ENCODE measurements at regions of chr3 and their contacts with region 1.

Region 1: DNA sequence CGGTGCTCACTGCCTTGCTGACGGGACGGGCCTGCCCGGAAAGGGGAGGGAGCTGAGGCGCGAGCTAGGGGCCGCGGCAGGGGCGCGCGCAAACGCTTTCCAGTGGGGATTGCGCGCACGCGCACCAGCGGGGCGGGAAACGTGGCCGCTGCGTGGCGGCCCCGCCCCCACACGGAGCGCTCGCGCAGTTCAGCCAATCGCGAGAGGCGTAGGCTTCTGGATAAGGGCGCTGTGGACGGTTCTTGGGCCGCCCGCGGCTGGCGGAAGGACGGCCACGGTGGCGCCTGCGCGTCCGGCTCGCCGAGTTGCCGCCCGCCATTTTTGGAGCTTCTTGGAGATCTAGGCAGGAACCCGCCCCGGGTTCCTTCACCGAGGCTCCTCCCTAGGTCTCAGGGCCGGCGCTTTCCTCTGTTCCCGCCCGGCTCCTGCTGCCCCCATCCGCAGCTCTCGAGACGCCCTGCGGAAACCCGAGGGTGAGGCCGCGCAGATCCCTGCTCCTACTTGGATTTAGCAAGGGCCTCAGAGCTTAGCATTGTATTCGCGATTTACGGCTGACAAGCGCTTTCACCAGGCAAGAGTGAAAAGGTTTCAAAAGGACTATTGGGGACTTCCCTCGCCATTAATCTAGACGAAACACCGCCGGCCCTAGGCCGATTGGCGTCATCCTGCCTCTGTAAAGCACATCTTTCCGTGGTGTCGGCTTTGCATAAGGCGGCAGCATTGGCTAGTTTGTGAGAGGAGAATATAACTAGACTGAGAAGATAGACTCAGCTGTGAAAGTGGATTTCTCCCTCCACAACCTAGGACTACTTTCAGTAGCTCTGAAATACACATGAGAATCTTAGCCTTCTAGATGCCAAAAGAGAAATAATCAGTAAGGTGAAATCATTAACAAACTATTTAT is 496 bp upstream of the STAG1 start:
- DNase-seq: peak; percentile 95 to 99 (median 99)
- ATAC-seq: peak; percentile 91
- H3K4me3 ChIP-seq: peak overlapping the region; percentile 87
- H3K4me3 Mint-ChIP-seq: peak overlapping the region; percentile 68 to 99 (median 88)
- H3K27ac ChIP-seq: peak overlapping the region; percentile 95
- H3K27ac Mint-ChIP-seq: peak overlapping the region; percentile 80 to 98 (median 94)
- H3K4me1 ChIP-seq: peaks cover 20 to 27% of the 10 kb centered on the region in 2 donors
- H3K4me1 Mint-ChIP-seq: peaks cover 37 to 50% (median 43%) of the 10 kb centered on the region in 7 donors
- H3K27me3 ChIP-seq: no peaks in the 10 kb centered on the region
- H3K27me3 Mint-ChIP-seq: no peaks in the 10 kb centered on the region

Region 2: DNA sequence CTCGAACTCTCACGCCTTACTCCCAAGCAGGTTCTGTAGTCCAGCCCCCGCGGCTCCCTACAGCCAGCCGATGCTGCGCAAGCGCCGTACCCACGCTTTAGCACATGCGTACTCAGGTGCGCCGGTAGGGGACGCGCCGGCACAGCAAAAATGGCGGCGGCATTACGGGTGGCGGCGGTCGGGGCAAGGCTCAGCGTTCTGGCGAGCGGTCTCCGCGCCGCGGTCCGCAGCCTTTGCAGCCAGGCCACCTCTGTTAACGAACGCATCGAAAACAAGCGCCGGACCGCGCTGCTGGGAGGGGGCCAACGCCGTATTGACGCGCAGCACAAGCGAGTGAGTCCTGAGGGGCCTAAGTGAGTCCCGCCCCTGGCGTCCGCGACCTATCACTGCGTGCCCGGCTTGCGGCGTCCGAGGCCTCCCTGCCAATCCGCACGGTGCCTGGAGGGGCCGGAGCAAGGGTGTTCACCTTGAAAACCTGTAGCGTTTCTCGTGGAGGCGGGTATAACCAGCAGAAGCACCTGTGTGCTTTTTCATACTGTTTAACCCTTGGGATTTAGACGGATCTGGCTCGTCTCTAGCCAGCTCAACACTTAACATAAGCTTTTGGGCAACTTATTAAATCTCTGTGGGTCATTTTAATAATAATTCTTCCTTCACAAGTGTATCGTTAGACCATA is 502.3 kb before region 1 on chr3 and contains the start of gene PCCB:
- CTCF ChIA-PET with region 1: interaction called, 5 read pairs
- POLR2A ChIA-PET with region 1: no interaction called
- intact Hi-C with region 1: loop called (anchors 1 kb)
- DNase-seq: peak; percentile 86 to 95 (median 93)
- ATAC-seq: peak; percentile 99
- H3K4me3 ChIP-seq: peak within 1 kb of the TSS; percentile 80
- H3K4me3 Mint-ChIP-seq: peak within 1 kb of the TSS; percentile 79 to 94 (median 90)
- H3K27ac ChIP-seq: peak within 1 kb of the TSS; percentile 80
- H3K27ac Mint-ChIP-seq: peak within 1 kb of the TSS; percentile 91 to 96 (median 93)
- H3K4me1 ChIP-seq: peaks cover 9% of the 10 kb centered on the region in 2 donors
- H3K4me1 Mint-ChIP-seq: peaks cover 12 to 30% (median 21%) of the 10 kb centered on the region in 7 donors
- H3K27me3 ChIP-seq: no peaks in the 10 kb centered on the region
- H3K27me3 Mint-ChIP-seq: no peaks in the 10 kb centered on the region
- total RNA-seq, gene PCCB: 13.6 to 22.6 (median 16.6) TPM

Region 3: GRCh38 chr3:136545664-136546268 is 206.9 kb before region 1 on chr3:
- CTCF ChIA-PET with region 1: no interaction called
- POLR2A ChIA-PET with region 1: no interaction called
- intact Hi-C with region 1: loop called (anchors 1 to 2 kb)
- DNase-seq: no peak
- ATAC-seq: no peak
- H3K4me3 ChIP-seq: no peak overlapping the region
- H3K4me3 Mint-ChIP-seq: no peak overlapping the region
- H3K27ac ChIP-seq: no peak overlapping the region
- H3K27ac Mint-ChIP-seq: peak overlapping the region in 2 of 9 donors; percentile 28 to 90
- H3K4me1 ChIP-seq: no peaks in the 10 kb centered on the region
- H3K4me1 Mint-ChIP-seq: peaks cover 4 to 30% (median 23%) of the 10 kb centered on the region in 7 donors
- H3K27me3 ChIP-seq: no peaks in the 10 kb centered on the region
- H3K27me3 Mint-ChIP-seq: no peaks in the 10 kb centered on the region

Region 4: DNA sequence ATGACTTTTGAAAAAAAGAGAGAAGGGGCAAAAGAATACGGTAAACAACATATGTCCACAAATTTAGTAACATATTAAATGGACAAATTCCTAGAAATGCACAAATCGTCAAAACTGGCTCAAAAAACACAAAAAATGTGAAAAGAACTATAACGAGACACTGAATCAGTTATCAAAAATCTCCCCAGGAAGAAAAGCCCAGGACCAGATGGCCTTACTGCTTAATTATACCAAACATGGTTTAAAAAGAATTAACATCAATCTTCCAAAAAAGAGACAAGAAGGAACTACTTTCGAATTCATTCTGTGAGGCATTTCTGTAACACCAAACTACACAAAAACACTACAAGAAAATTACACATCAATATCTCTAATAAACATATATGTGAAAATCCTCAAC is 117.9 kb before region 1 on chr3:
- CTCF ChIA-PET with region 1: no interaction called
- POLR2A ChIA-PET with region 1: no interaction called
- intact Hi-C with region 1: no loop called
- DNase-seq: no peak
- ATAC-seq: no peak
- H3K4me3 ChIP-seq: no peak overlapping the region
- H3K4me3 Mint-ChIP-seq: peak overlapping the region in 1 of 10 donors; percentile 1
- H3K27ac ChIP-seq: no peak overlapping the region
- H3K27ac Mint-ChIP-seq: peak overlapping the region in 1 of 9 donors; percentile 38
- H3K4me1 ChIP-seq: no peaks in the 10 kb centered on the region
- H3K4me1 Mint-ChIP-seq: peaks cover 6 to 58% (median 55%) of the 10 kb centered on the region in 7 donors
- H3K27me3 ChIP-seq: no peaks in the 10 kb centered on the region
- H3K27me3 Mint-ChIP-seq: no peaks in the 10 kb centered on the region

Region 5: DNA sequence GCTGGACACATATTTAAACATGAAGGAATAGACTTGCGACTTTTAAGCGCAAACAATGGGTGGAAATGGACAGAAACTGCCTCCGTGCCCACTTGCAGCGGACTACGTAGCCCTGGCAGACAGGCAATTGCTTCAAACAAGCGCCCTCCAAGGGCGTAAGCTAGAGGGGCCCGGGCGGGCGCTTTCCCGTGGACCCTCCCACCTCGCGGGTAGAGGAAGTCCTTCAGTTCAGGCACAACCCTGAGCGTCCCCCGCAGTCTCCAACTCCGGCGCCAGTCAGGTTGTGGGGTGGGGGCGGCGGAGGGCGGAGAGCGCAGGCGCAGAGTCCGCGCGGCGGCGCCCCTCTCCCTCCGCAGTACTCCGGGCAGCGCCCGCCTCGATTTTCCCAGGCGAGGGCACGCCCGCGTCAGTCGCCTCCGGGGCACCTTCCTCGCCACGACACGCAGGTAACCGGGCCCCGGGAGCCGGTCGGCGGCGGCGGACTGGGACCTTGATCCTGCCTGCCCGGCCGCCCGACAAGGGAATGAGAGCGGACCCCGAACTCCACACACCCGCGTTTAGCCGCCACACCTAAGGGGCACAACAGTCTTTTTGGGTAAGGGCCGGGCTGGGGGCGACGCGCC is 66.2 kb after region 1 on chr3 and contains the start of gene SLC35G2:
- CTCF ChIA-PET with region 1: no interaction called
- POLR2A ChIA-PET with region 1: no interaction called
- intact Hi-C with region 1: loop called (anchors 1 to 2 kb)
- DNase-seq: peak in 4 of 9 donors; percentile 7 to 63 (median 10)
- ATAC-seq: peak; percentile 67
- H3K4me3 ChIP-seq: peak within 1 kb of the TSS; percentile 44
- H3K4me3 Mint-ChIP-seq: peak within 1 kb of the TSS; percentile 83 to 94 (median 86)
- H3K27ac ChIP-seq: no peak within 1 kb of the TSS
- H3K27ac Mint-ChIP-seq: peak within 1 kb of the TSS in 1 of 9 donors; percentile 52
- H3K4me1 ChIP-seq: peaks cover 6 to 10% of the 10 kb centered on the region in 2 donors
- H3K4me1 Mint-ChIP-seq: peaks cover 10 to 23% (median 19%) of the 10 kb centered on the region in 7 donors
- H3K27me3 ChIP-seq: peaks cover 0 to 3% of the 10 kb centered on the region in 2 donors
- H3K27me3 Mint-ChIP-seq: peaks cover 50 to 65% (median 56%) of the 10 kb centered on the region in 5 donors
- total RNA-seq, gene SLC35G2: 0.60 TPM in 1 of 5 experiments, not detected in the others

Region 6: GRCh38 chr3:137013955-137014688 is 261.4 kb after region 1 on chr3:
- CTCF ChIA-PET with region 1: interaction called, 32 read pairs
- POLR2A ChIA-PET with region 1: interaction called, 23 read pairs
- intact Hi-C with region 1: loop called (anchors 1 kb)
- DNase-seq: peak; percentile 59 to 87 (median 78)
- ATAC-seq: peak; percentile 93
- H3K4me3 ChIP-seq: peak overlapping the region; percentile 43
- H3K4me3 Mint-ChIP-seq: peak overlapping the region; percentile 65 to 87 (median 80)
- H3K27ac ChIP-seq: no peak overlapping the region
- H3K27ac Mint-ChIP-seq: peak overlapping the region in 4 of 9 donors; percentile 24 to 64 (median 57)
- H3K4me1 ChIP-seq: no peaks in the 10 kb centered on the region
- H3K4me1 Mint-ChIP-seq: peaks cover 5 to 10% (median 9%) of the 10 kb centered on the region in 7 donors
- H3K27me3 ChIP-seq: no peaks in the 10 kb centered on the region
- H3K27me3 Mint-ChIP-seq: peaks cover 0 to 4% (median 0%) of the 10 kb centered on the region in 5 donors

Region 7: DNA sequence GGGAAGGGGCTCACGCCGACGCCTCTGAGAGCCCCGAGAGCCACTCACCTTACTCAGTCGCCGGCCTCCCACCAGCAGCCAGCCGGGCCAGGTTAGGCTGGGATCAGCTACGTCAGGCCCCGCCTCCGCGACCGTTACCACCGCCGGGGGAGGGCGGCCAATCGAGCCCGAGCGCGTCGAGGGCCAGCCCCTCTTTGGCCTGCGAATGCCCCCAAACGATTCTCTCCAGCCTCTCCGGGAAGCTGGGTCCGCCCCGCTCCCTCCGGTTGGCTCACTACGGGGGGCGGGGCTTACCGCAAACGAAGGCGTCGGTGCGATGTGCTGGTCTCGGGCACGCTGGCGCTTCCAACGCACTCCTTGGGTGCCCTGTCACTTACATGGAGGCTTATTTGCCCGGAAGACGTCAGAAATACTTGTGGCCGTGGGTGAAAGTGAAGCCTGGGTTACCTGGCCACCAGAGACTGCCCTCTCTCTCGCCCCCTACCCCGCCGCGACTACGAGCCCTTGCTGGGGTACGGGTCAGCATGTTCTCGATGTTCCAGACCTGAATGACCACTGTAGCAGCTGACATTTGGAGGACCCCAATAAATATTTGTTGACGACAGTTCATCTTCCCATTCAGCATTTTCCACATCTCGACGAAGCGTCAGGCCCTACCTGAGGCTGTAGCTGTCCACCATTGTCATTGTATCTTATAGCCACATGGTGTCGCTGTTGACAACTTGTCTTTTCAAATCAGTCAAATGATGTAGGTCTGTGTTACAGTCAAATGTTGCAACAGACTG is 1841.7 kb after region 1 on chr3 and contains the start of gene CEP70:
- CTCF ChIA-PET with region 1: no interaction called
- POLR2A ChIA-PET with region 1: no interaction called
- intact Hi-C with region 1: loop called in 1 of 2 experiments (anchors 1 kb)
- DNase-seq: peak; percentile 79 to 92 (median 89)
- ATAC-seq: peak; percentile 95
- H3K4me3 ChIP-seq: peak within 1 kb of the TSS; percentile 96
- H3K4me3 Mint-ChIP-seq: peak within 1 kb of the TSS; percentile 87 to 96 (median 90)
- H3K27ac ChIP-seq: peak within 1 kb of the TSS; percentile 79
- H3K27ac Mint-ChIP-seq: peak within 1 kb of the TSS; percentile 82 to 99 (median 94)
- H3K4me1 ChIP-seq: peaks cover 0 to 4% of the 10 kb centered on the region in 2 donors
- H3K4me1 Mint-ChIP-seq: peaks cover 0 to 17% (median 12%) of the 10 kb centered on the region in 7 donors
- H3K27me3 ChIP-seq: no peaks in the 10 kb centered on the region
- H3K27me3 Mint-ChIP-seq: no peaks in the 10 kb centered on the region
- total RNA-seq, gene CEP70: 11.8 to 35.1 (median 21.1) TPM

Measured in naive thymus-derived CD4-positive, alpha-beta T cell (primary cell).